CD4-positive, alpha-beta memory T cell (primary cell): ENCODE measurements at regions of chr17 and their contacts with region 1.

Region 1: DNA sequence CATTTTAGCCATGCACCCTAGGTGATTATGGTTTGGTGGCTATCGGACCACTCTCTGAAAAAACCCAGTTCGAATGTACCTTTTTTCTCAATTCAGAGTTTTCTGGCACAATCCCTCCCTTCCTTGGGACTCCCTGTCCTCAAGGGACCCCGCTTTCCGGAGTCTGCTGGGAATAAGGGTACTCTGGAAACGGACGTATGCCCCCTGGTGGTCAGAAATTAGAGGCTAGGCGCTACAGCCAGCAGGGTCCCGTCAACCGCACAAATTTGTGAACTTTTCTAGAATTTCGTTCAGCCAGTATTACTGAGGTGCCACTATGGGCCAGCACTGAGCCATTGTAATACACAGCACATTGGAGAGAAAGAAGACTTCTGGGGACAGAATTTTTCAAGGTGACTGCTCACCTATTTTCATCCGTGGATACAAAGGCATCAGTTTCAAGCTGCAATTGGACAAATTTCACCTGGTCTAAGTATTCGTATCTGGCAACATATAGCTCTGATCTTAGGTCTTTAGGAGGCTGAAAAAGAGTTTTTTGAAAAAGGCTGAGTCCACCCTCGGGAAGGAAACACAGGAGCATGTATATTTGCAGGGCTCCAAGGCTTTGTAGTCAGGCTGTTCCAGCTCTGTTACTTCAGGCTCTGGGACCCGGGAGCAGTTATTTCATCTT is 27.1 kb upstream of the CRYBA1 start:
- DNase-seq: peak; percentile 60 to 67 (median 64)
- H3K4me3 ChIP-seq: no peak overlapping the region
- H3K4me3 Mint-ChIP-seq: no peak overlapping the region
- H3K27ac ChIP-seq: no peak overlapping the region
- H3K27ac Mint-ChIP-seq: peak overlapping the region in 1 of 7 donors; percentile 8
- H3K4me1 ChIP-seq: no peaks in the 10 kb centered on the region
- H3K4me1 Mint-ChIP-seq: peaks cover 4 to 9% (median 7%) of the 10 kb centered on the region in 4 donors
- H3K27me3 ChIP-seq: no peaks in the 10 kb centered on the region
- H3K27me3 Mint-ChIP-seq: peaks cover 0 to 2% of the 10 kb centered on the region in 2 donors

Region 2: DNA sequence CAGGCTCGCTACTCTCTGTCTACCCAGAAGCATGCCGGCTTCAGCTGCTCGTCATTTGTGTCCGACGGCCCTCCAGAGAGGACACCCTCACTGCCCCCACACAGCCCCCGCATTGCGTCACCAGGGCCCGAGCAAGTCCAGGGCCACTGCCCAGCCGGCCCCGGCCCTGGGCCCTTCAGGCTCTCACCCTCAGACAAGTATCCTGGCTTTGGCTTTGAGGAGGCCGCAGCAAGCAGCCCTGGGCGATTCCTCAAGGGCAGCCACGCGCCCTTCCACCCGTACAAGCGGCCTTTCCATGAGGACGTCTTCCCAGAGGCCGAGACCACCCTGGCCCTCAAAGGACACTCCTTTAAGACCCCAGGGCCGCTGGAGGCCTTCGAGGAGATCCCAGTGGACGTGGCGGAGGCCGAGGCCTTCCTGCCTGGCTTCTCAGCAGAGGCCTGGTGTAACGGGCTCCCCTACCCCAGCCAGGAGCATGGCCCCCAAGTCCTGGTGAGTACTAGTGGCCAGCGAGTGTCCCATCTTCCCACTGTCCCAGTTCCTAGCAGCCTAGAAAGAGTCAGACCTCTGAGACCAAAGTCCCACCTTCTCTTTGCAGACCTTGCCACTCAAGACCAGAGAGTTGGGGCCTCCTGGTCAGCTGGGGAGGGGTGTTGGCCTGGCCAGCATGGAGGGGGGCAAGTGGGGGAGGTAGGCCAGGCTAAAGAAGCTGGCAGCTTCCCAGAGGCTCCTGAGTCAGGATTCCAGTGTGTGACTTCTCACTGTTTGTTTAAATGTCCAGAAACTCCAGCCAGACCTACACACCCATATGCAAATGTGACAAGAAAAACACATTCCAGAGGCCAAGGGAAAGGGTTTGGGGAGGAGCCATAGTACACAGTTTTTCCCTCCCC is 694.8 kb before region 1 on chr17:
- CTCF ChIA-PET with region 1: no interaction called
- POLR2A ChIA-PET with region 1: no interaction called
- intact Hi-C with region 1: no loop called
- DNase-seq: no peak
- H3K4me3 ChIP-seq: no peak overlapping the region
- H3K4me3 Mint-ChIP-seq: no peak overlapping the region
- H3K27ac ChIP-seq: no peak overlapping the region
- H3K27ac Mint-ChIP-seq: no peak overlapping the region
- H3K4me1 ChIP-seq: no peaks in the 10 kb centered on the region
- H3K4me1 Mint-ChIP-seq: no peaks in the 10 kb centered on the region
- H3K27me3 ChIP-seq: no peaks in the 10 kb centered on the region
- H3K27me3 Mint-ChIP-seq: no peaks in the 10 kb centered on the region

Region 3: GRCh38 chr17:29078183-29079045 is 141.1 kb before region 1 on chr17:
- CTCF ChIA-PET with region 1: no interaction called
- POLR2A ChIA-PET with region 1: no interaction called
- intact Hi-C with region 1: no loop called
- DNase-seq: no peak
- H3K4me3 ChIP-seq: no peak overlapping the region
- H3K4me3 Mint-ChIP-seq: no peak overlapping the region
- H3K27ac ChIP-seq: no peak overlapping the region
- H3K27ac Mint-ChIP-seq: peak overlapping the region in 1 of 7 donors; percentile 35
- H3K4me1 ChIP-seq: no peaks in the 10 kb centered on the region
- H3K4me1 Mint-ChIP-seq: no peaks in the 10 kb centered on the region
- H3K27me3 ChIP-seq: no peaks in the 10 kb centered on the region
- H3K27me3 Mint-ChIP-seq: no peaks in the 10 kb centered on the region

Region 4: GRCh38 chr17:29116804-29117772 is 102.4 kb before region 1 on chr17:
- CTCF ChIA-PET with region 1: interaction called, 10 read pairs
- POLR2A ChIA-PET with region 1: no interaction called
- intact Hi-C with region 1: no loop called
- DNase-seq: peak; percentile 66 to 73 (median 71)
- H3K4me3 ChIP-seq: no peak overlapping the region
- H3K4me3 Mint-ChIP-seq: peak overlapping the region in 1 of 8 donors; percentile 15
- H3K27ac ChIP-seq: no peak overlapping the region
- H3K27ac Mint-ChIP-seq: peak overlapping the region in 4 of 7 donors; percentile 43 to 75 (median 60)
- H3K4me1 ChIP-seq: peaks cover 4% of the 10 kb centered on the region
- H3K4me1 Mint-ChIP-seq: peaks cover 4 to 9% (median 8%) of the 10 kb centered on the region in 4 donors
- H3K27me3 ChIP-seq: no peaks in the 10 kb centered on the region
- H3K27me3 Mint-ChIP-seq: no peaks in the 10 kb centered on the region

Region 5: GRCh38 chr17:29133146-29133713 is 86.3 kb before region 1 on chr17:
- CTCF ChIA-PET with region 1: interaction called, 25 read pairs
- POLR2A ChIA-PET with region 1: no interaction called
- intact Hi-C with region 1: no loop called
- DNase-seq: no peak
- H3K4me3 ChIP-seq: no peak overlapping the region
- H3K4me3 Mint-ChIP-seq: no peak overlapping the region
- H3K27ac ChIP-seq: no peak overlapping the region
- H3K27ac Mint-ChIP-seq: peak overlapping the region in 3 of 7 donors; percentile 30 to 53 (median 46)
- H3K4me1 ChIP-seq: peaks cover 62% of the 10 kb centered on the region
- H3K4me1 Mint-ChIP-seq: peaks cover 30 to 72% (median 43%) of the 10 kb centered on the region in 4 donors
- H3K27me3 ChIP-seq: no peaks in the 10 kb centered on the region
- H3K27me3 Mint-ChIP-seq: no peaks in the 10 kb centered on the region

Region 6: DNA sequence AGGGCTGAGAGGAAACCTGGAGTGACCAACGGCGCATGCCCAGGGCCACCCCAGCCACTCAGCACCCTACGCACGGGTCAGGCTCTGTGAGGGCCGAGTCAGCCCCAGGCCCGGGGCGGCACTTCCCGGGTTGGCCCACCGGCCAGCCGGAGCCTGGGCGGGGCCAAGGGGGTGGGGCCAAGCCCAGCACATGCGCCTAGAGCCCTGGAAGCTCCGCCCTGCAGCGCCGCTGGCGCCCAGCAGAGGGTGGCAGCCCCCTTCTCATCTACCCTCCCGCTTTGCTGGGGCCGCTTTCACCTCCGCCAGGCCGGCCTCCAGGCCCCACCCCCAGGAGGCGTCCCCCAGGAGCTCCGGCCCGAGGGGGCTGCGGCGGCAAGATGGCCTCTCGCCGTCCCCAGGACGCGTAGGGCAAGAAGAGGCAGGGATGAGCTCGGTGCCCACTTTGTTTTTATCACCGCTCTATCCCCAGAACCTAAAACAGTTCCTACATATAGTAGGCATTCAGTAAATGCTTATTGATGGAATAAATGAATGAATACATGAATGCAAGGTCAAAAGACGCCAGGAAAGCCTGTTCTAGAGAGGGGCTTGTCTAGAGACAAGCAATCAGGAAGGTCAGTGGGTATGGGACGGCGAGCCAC is 70.6 kb before region 1 on chr17:
- CTCF ChIA-PET with region 1: interaction called, 277 read pairs
- POLR2A ChIA-PET with region 1: interaction called, 16 read pairs
- intact Hi-C with region 1: loop called (anchors 1 kb)
- DNase-seq: peak; percentile 88 to 91 (median 89)
- H3K4me3 ChIP-seq: peak overlapping the region; percentile 41 to 42
- H3K4me3 Mint-ChIP-seq: peak overlapping the region; percentile 68 to 84 (median 75)
- H3K27ac ChIP-seq: peak overlapping the region; percentile 53
- H3K27ac Mint-ChIP-seq: peak overlapping the region; percentile 66 to 92 (median 90)
- H3K4me1 ChIP-seq: peaks cover 27% of the 10 kb centered on the region
- H3K4me1 Mint-ChIP-seq: peaks cover 23 to 62% (median 33%) of the 10 kb centered on the region in 4 donors
- H3K27me3 ChIP-seq: no peaks in the 10 kb centered on the region
- H3K27me3 Mint-ChIP-seq: no peaks in the 10 kb centered on the region

Region 7: DNA sequence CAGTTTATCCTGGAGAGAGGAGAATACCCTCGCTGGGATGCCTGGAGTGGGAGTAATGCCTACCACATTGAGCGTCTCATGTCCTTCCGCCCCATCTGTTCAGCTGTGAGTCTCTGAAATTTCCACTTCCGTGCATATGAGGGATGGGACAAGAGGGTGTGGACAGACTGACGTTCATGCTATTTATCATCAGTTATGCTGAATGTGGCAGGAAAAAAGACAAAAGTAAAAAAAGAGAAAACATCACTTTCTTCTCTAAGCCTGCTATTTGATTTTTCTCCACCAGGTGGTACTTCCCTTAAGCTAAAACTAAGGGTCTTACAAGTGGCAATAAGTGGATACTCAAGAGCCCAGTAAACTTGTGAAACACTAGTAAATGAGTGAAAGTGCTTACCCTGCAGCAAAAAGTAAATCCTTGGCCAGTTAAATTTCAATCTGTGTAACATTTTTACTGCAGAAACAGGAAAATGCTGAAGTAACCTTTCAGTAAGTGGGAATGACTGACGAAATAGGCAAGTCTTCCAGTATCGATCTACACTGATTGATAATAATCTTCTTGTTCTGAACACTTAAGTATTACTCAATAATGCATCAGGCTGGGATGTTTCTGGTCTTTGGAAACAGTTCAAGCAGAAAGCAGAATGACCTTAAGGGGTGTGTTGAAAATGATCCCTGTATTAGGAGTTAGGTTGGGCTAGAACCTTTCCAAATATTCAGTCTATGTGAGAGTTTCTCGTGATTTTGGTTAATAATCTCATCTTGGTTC is 32.8 kb after region 1 on chr17:
- CTCF ChIA-PET with region 1: interaction called, 11 read pairs
- POLR2A ChIA-PET with region 1: no interaction called
- intact Hi-C with region 1: no loop called
- DNase-seq: peak in 1 of 5 donors; percentile 6
- H3K4me3 ChIP-seq: no peak overlapping the region
- H3K4me3 Mint-ChIP-seq: no peak overlapping the region
- H3K27ac ChIP-seq: no peak overlapping the region
- H3K27ac Mint-ChIP-seq: peak overlapping the region in 4 of 7 donors; percentile 14 to 37 (median 22)
- H3K4me1 ChIP-seq: no peaks in the 10 kb centered on the region
- H3K4me1 Mint-ChIP-seq: peaks cover 8 to 12% (median 10%) of the 10 kb centered on the region in 4 donors
- H3K27me3 ChIP-seq: no peaks in the 10 kb centered on the region
- H3K27me3 Mint-ChIP-seq: no peaks in the 10 kb centered on the region

Region 8: GRCh38 chr17:29625037-29625750 is 405.7 kb after region 1 on chr17:
- CTCF ChIA-PET with region 1: no interaction called
- POLR2A ChIA-PET with region 1: no interaction called
- intact Hi-C with region 1: no loop called
- DNase-seq: no peak
- H3K4me3 ChIP-seq: no peak overlapping the region
- H3K4me3 Mint-ChIP-seq: no peak overlapping the region
- H3K27ac ChIP-seq: no peak overlapping the region
- H3K27ac Mint-ChIP-seq: peak overlapping the region in 6 of 7 donors; percentile 25 to 75 (median 32)
- H3K4me1 ChIP-seq: peaks cover 26% of the 10 kb centered on the region
- H3K4me1 Mint-ChIP-seq: peaks cover 14 to 37% (median 28%) of the 10 kb centered on the region in 4 donors
- H3K27me3 ChIP-seq: no peaks in the 10 kb centered on the region
- H3K27me3 Mint-ChIP-seq: no peaks in the 10 kb centered on the region